A673 (cell line): ENCODE measurements at regions of chr22 and their contacts with region 1.

Region 1: DNA sequence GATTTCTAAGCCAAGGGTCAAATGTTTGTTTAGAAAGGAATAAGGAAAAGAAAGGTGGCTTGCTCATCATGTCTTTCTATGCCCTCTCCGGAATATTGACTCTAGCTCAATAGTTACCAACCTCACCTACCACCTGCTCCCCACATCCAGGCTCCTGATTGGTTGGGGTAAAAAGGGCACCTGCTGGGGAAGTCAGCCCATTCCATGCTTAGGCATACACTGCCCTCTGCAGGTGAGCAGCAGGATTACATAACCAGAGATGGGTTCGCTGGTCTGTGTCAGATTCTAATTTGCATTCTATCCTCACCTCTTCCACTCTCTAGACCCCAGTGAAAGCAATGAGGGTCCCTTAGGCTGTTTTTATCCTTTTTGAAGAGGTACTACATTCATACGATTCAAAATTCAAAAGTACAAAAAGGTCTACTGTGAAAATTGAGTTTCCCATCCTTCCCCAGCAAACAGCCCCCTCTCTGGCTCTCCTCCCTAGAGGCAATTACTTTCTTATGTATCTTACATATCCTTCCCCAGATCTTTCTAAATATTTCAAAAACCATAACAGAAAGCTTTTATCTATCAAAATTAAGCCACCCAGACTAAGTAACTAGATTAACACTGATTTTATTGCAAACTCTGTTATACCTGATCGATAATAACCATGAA is 98.0 kb upstream of the ASPHD2 start:
- DNase-seq: peak; percentile 53
- H3K4me3 ChIP-seq: no peak overlapping the region
- H3K27ac ChIP-seq: no peak overlapping the region
- H3K4me1 ChIP-seq: no peaks in the 10 kb centered on the region
- H3K27me3 ChIP-seq: peaks cover 3% of the 10 kb centered on the region
- CTCF ChIP-seq: peak; percentile 90

Region 2: DNA sequence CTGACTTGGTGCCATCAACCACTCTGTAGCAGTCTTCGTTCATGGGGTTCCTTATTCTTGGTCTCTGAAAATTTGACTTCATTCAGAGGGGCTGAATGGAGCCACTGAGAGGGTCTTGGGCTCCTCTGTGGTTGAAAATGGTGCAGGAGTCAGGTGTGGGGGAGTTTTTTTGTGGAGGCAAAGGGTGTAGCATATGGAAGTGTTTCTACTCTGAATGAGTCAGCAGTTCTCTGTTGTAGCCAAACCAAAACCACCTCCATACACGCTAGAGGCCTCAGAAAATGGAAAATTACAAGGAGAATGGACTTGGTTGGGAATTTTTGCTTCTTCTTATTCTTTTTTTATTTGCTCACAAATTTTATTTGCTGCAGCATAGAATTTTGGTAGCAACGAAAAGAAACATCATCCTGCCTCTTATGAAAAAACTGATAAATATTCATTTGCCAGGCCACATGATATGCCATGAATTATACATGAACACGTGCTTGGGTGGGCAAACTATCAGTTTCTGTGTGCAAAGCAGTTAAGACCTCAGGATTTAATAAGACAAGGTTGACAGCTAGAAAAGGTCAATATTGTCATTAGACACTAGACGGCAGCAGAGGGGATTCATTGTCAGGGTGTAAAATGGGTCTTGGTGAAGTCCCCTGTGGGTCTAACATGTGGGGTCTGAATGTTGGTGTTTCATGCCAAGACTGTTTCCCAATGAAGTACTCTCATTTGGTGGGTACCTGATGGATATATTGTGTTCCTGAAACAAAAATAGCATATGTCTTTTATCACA is 477.4 kb before region 1 on chr22:
- CTCF ChIA-PET with region 1: no interaction called
- POLR2A ChIA-PET with region 1: no interaction called
- intact Hi-C with region 1: loop called (anchors 5 kb)
- DNase-seq: peak; percentile 60
- H3K4me3 ChIP-seq: no peak overlapping the region
- H3K27ac ChIP-seq: no peak overlapping the region
- H3K4me1 ChIP-seq: no peaks in the 10 kb centered on the region
- H3K27me3 ChIP-seq: peaks cover 4% of the 10 kb centered on the region
- CTCF ChIP-seq: peak; percentile 54

Region 3: DNA sequence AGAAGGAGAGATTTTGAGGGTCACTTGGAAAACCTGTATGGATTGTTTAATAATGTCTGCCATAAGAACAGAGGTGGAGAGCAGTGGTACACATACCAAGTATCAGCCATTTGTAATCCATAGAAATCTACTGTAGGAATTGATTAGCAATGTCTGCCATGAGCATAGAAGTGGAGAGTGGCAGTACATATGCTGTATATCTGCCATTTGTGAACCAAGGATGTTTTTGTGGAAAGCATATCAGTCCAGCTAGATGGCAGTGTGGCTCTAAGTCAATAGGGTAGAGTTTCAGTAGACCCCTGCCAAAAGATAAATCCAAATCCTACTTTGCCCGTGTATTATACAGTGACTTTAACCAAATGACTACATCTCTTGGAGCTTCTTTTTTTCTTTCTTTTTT is 244.7 kb before region 1 on chr22:
- CTCF ChIA-PET with region 1: no interaction called
- POLR2A ChIA-PET with region 1: no interaction called
- intact Hi-C with region 1: loop called (anchors 5 kb)
- DNase-seq: peak; percentile 16
- H3K4me3 ChIP-seq: no peak overlapping the region
- H3K27ac ChIP-seq: no peak overlapping the region
- H3K4me1 ChIP-seq: no peaks in the 10 kb centered on the region
- H3K27me3 ChIP-seq: peaks cover 12% of the 10 kb centered on the region
- CTCF ChIP-seq: peak; percentile 34; the same call in 1 of the 2 replicates

Region 4: GRCh38 chr22:26172389-26172990 is 158.6 kb before region 1 on chr22:
- CTCF ChIA-PET with region 1: no interaction called
- POLR2A ChIA-PET with region 1: no interaction called
- intact Hi-C with region 1: loop called (anchors 5 kb)
- DNase-seq: peak; percentile 40
- H3K4me3 ChIP-seq: no peak overlapping the region
- H3K27ac ChIP-seq: no peak overlapping the region
- H3K4me1 ChIP-seq: no peaks in the 10 kb centered on the region
- H3K27me3 ChIP-seq: peaks cover 54% of the 10 kb centered on the region
- CTCF ChIP-seq: peak; percentile 74

Region 5: DNA sequence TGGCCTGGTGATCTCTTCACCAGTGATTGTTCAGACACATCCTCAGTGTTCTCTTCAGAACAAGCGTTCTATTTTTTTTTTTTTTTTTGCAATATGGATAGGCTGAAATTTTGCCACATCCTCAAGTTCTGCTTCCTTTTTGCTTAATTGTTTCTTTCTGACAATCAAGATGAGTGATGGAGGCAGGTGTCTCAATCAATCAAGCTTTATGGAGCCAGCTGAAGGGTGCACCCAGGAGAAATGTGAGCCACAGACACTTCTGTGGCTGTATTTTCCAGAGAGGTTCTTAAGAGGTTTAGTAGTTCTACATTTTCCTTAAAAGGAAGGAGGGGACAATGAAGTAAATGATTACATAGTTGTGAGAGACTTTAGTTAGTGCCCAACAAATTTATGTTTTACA is 54.1 kb after region 1 on chr22:
- CTCF ChIA-PET with region 1: interaction called, 10 read pairs
- POLR2A ChIA-PET with region 1: no interaction called
- intact Hi-C with region 1: no loop called
- DNase-seq: no peak
- H3K4me3 ChIP-seq: no peak overlapping the region
- H3K27ac ChIP-seq: no peak overlapping the region
- H3K4me1 ChIP-seq: no peaks in the 10 kb centered on the region
- H3K27me3 ChIP-seq: peaks cover 15% of the 10 kb centered on the region
- CTCF ChIP-seq: no peak